ENCODE measurements at regions of chr1 and their contacts with region 1.

Region 1: GRCh38 chr1:214632091-214632490 is 29.1 kb downstream of the CENPF start:
- DNase-seq: no peak
- H3K4me3 Mint-ChIP-seq: no peak overlapping the region
- H3K27ac Mint-ChIP-seq: peak overlapping the region; percentile 66
- H3K4me1 Mint-ChIP-seq: peaks cover 4% of the 10 kb centered on the region
- H3K27me3 Mint-ChIP-seq: no peaks in the 10 kb centered on the region
- CTCF ChIP-seq: no peak

Region 2: GRCh38 chr1:214019499-214019898 is 612.6 kb before region 1 on chr1:
- CTCF ChIA-PET with region 1: no interaction called
- POLR2A ChIA-PET with region 1: no interaction called
- intact Hi-C with region 1: no loop called
- DNase-seq: no peak
- H3K4me3 Mint-ChIP-seq: no peak overlapping the region
- H3K27ac Mint-ChIP-seq: no peak overlapping the region
- H3K4me1 Mint-ChIP-seq: no peaks in the 10 kb centered on the region
- H3K27me3 Mint-ChIP-seq: peaks cover 70% of the 10 kb centered on the region
- CTCF ChIP-seq: no peak

Region 3: DNA sequence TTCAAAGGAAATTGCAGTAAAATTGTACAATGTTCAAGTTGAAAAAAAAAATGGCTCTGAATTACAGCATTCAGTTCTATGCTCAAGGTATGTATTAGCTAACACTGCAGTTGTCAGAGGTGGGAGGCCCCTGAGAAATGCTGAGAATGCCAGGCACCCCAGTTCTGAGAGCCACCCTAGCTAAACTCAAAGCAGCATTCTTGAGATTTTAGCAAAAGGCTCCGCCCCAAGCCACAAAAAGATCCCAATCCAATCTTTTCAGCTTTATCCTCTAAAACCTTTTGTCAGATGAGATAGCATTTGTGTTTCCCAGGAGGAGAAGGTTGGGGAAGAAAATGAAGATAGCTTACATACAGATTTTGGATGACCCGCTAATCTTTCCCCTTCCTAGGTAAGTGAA is 282.3 kb before region 1 on chr1:
- CTCF ChIA-PET with region 1: interaction called, 27 read pairs
- POLR2A ChIA-PET with region 1: no interaction called
- intact Hi-C with region 1: no loop called
- DNase-seq: no peak
- H3K4me3 Mint-ChIP-seq: no peak overlapping the region
- H3K27ac Mint-ChIP-seq: peak overlapping the region; percentile 23
- H3K4me1 Mint-ChIP-seq: no peaks in the 10 kb centered on the region
- H3K27me3 Mint-ChIP-seq: no peaks in the 10 kb centered on the region
- CTCF ChIP-seq: no peak

Region 4: DNA sequence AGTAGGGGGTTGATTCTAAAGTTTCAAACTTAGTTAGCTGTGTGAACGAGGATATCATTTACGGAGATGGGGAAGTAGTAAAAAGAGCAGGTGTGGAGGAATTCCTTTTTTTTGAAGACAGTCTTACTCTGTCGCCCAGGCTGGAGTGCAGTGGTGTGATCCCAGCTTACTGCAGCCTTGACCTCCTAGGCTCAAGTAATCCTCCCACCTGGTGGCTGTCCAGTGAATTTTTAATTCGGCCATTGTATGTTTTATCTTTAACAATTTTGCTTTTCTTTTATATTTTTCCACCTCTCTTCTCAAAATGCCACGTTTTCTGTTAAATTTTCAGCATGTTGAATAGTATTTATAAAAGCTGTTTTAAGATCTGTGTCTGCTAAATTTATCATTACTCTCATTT is 41.4 kb before region 1 on chr1:
- CTCF ChIA-PET with region 1: interaction called, 55 read pairs
- POLR2A ChIA-PET with region 1: no interaction called
- intact Hi-C with region 1: no loop called
- DNase-seq: no peak
- H3K4me3 Mint-ChIP-seq: no peak overlapping the region
- H3K27ac Mint-ChIP-seq: no peak overlapping the region
- H3K4me1 Mint-ChIP-seq: no peaks in the 10 kb centered on the region
- H3K27me3 Mint-ChIP-seq: no peaks in the 10 kb centered on the region
- CTCF ChIP-seq: peak; percentile 33

Region 5: GRCh38 chr1:214648801-214649200 is 16.7 kb after region 1 on chr1:
- CTCF ChIA-PET with region 1: interaction called, 197 read pairs
- POLR2A ChIA-PET with region 1: no interaction called
- intact Hi-C with region 1: no loop called
- DNase-seq: no peak
- H3K4me3 Mint-ChIP-seq: no peak overlapping the region
- H3K27ac Mint-ChIP-seq: no peak overlapping the region
- H3K4me1 Mint-ChIP-seq: no peaks in the 10 kb centered on the region
- H3K27me3 Mint-ChIP-seq: no peaks in the 10 kb centered on the region
- CTCF ChIP-seq: no peak

Region 6: DNA sequence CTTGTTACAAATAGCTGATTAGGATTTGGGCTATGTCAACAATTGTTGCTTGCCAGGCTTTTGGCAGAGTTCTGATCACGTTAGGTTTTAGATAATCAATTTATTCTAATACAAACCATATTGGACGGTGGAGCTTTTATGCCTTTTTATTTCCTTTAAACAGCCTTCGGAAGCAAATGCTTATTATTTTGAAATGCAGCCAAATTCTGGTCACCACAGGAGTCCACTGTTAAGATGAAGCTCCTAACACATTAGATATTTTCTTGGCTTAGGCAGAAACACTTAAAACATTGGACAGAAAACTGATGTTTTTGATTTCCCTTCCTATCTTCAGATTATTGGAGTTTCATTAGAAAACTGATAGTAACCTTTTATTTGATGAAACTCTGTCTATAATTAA is 53.8 kb after region 1 on chr1:
- CTCF ChIA-PET with region 1: no interaction called
- POLR2A ChIA-PET with region 1: no interaction called
- intact Hi-C with region 1: no loop called
- DNase-seq: no peak
- H3K4me3 Mint-ChIP-seq: no peak overlapping the region
- H3K27ac Mint-ChIP-seq: no peak overlapping the region
- H3K4me1 Mint-ChIP-seq: no peaks in the 10 kb centered on the region
- H3K27me3 Mint-ChIP-seq: no peaks in the 10 kb centered on the region
- CTCF ChIP-seq: no peak

Region 7: DNA sequence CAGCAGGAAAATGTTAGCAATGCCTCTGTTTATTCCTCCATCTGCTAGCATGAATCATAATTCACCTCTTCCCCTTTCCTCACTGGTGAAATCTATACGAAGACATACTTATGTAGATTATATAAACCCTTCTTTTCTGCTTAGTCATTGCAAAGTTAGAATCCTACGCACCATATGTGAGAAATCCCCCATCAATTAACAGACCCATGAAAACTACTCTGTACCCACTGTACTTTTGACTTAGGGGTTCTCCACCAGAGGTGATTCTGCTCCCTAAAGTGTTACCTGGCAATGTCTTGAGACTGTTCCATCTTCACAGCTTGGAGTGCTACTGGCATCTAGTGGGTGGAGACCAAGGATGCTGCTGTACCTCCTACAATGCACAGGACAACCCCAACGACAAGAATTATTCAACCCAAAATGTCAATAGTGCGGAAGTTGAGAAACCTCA is 885.4 kb after region 1 on chr1:
- CTCF ChIA-PET with region 1: interaction called, 12 read pairs
- POLR2A ChIA-PET with region 1: no interaction called
- intact Hi-C with region 1: no loop called
- DNase-seq: peak; percentile 79
- H3K4me3 Mint-ChIP-seq: no peak overlapping the region
- H3K27ac Mint-ChIP-seq: peak overlapping the region; percentile 65
- H3K4me1 Mint-ChIP-seq: peaks cover 12% of the 10 kb centered on the region
- H3K27me3 Mint-ChIP-seq: no peaks in the 10 kb centered on the region
- CTCF ChIP-seq: peak; percentile 87

Region 8: DNA sequence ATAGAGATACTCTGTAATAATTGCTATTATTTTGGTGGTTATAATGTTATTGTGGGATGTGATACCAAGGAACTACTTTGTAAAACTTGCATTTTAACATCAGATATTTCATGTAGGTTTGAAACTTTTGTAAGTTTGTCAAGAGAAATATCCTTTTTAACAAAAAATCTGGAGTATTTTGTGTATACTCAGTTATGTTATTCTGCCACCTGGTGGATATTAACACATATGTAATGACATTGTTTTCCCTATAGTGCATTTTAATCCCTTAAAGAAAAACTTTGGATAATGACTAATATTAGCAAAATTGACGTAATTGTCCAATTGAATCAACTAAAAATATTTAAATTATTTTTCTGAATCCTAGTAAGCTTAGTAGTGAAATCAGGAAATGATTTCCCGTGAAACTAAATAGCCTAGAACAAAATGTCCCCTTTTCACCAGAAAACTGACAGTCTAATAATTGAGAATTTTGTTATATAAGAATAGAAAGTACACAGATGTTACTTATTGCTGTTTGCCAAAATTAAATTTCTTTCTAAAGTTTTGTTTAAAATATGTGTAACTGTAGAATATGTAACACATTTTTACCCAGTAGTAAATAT is 974.6 kb after region 1 on chr1:
- CTCF ChIA-PET with region 1: interaction called, 6 read pairs
- POLR2A ChIA-PET with region 1: no interaction called
- intact Hi-C with region 1: loop called (anchors 1 kb)
- DNase-seq: peak; percentile 50
- H3K4me3 Mint-ChIP-seq: no peak overlapping the region
- H3K27ac Mint-ChIP-seq: peak overlapping the region; percentile 32
- H3K4me1 Mint-ChIP-seq: peaks cover 21% of the 10 kb centered on the region
- H3K27me3 Mint-ChIP-seq: no peaks in the 10 kb centered on the region
- CTCF ChIP-seq: peak; percentile 68

Measured in MCF 10A (cell line).